T-cell (primary cell): ENCODE measurements at regions of chr11 and their contacts with region 1.

Region 1: DNA sequence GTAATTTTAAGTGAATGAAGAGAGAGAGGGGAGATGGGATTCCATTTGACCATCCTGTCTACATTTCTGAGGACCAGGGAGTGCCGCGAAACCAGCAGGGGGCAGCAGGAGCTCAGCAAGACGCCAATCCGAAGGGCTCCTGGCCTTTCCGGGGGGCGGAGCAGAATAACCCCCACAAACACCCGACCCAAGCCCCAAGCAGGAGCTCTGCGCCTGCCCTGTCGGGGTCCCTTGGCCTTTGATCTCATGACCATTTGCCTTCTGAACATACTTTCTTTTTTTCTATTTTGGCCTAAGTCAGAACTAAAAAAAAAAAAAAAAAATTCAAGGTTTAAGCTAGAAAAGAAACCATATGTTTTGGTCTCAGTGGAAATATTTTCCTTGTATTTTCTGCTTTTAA is 21.9 kb upstream of the SCN2B start:
- DNase-seq: peak; percentile 57 to 89 (median 76)
- ATAC-seq: peak; percentile 39 to 67 (median 64)
- H3K4me3 ChIP-seq: no peak overlapping the region
- H3K4me3 Mint-ChIP-seq: no peak overlapping the region
- H3K27ac ChIP-seq: peak overlapping the region; percentile 37
- H3K27ac Mint-ChIP-seq: peak overlapping the region; percentile 74 to 78
- H3K4me1 ChIP-seq: peaks cover 26 to 38% of the 10 kb centered on the region in 2 experiments
- H3K4me1 Mint-ChIP-seq: peaks cover 8 to 16% (median 14%) of the 10 kb centered on the region in 3 donors
- H3K27me3 ChIP-seq: no peaks in the 10 kb centered on the region
- H3K27me3 Mint-ChIP-seq: no peaks in the 10 kb centered on the region

Region 2: GRCh38 chr11:117796872-117797529 is 401.4 kb before region 1 on chr11 and contains the start of gene DSCAML1:
- CTCF ChIA-PET with region 1: no interaction called
- POLR2A ChIA-PET with region 1: no interaction called
- DNase-seq: peak in 21 of 35 experiments; percentile 12 to 58 (median 33)
- ATAC-seq: peak; percentile 80 to 93 (median 86)
- H3K4me3 ChIP-seq: peak within 1 kb of the TSS; percentile 30 to 49
- H3K4me3 Mint-ChIP-seq: peak within 1 kb of the TSS; percentile 58 to 71 (median 65)
- H3K27ac ChIP-seq: no peak within 1 kb of the TSS
- H3K27ac Mint-ChIP-seq: no peak within 1 kb of the TSS
- H3K4me1 ChIP-seq: peaks cover 0 to 23% of the 10 kb centered on the region in 2 experiments
- H3K4me1 Mint-ChIP-seq: peaks cover 11 to 21% (median 20%) of the 10 kb centered on the region in 3 donors
- H3K27me3 ChIP-seq: peaks cover 9 to 66% of the 10 kb centered on the region in 2 experiments
- H3K27me3 Mint-ChIP-seq: peaks cover 53 to 62% of the 10 kb centered on the region in 2 donors
- total RNA-seq, gene DSCAML1: 0.15 to 2.4 (median 0.96) TPM

Region 3: GRCh38 chr11:118209033-118209432 is 10.7 kb after region 1 on chr11:
- CTCF ChIA-PET with region 1: interaction called, 6 to 10 read pairs
- POLR2A ChIA-PET with region 1: interaction called in 1 of 2 experiments, 3 read pairs
- DNase-seq: no peak
- ATAC-seq: no peak
- H3K4me3 ChIP-seq: no peak overlapping the region
- H3K4me3 Mint-ChIP-seq: no peak overlapping the region
- H3K27ac ChIP-seq: no peak overlapping the region
- H3K27ac Mint-ChIP-seq: peak overlapping the region; percentile 28 to 71
- H3K4me1 ChIP-seq: peaks cover 37% of the 10 kb centered on the region in 2 experiments
- H3K4me1 Mint-ChIP-seq: peaks cover 46 to 66% (median 63%) of the 10 kb centered on the region in 3 donors
- H3K27me3 ChIP-seq: no peaks in the 10 kb centered on the region
- H3K27me3 Mint-ChIP-seq: no peaks in the 10 kb centered on the region

Region 4: GRCh38 chr11:118224511-118225188 is 26.3 kb after region 1 on chr11 and contains the start of gene JAML:
- CTCF ChIA-PET with region 1: interaction called, 4 to 20 read pairs
- POLR2A ChIA-PET with region 1: interaction called in 1 of 2 experiments, 4 read pairs
- DNase-seq: peak; percentile 39 to 86 (median 67)
- ATAC-seq: peak; percentile 84 to 90 (median 90)
- H3K4me3 ChIP-seq: peak within 1 kb of the TSS; percentile 63 to 87
- H3K4me3 Mint-ChIP-seq: peak within 1 kb of the TSS; percentile 83 to 91 (median 90)
- H3K27ac ChIP-seq: peak within 1 kb of the TSS; percentile 84
- H3K27ac Mint-ChIP-seq: peak within 1 kb of the TSS in 1 of 2 donors; percentile 94
- H3K4me1 ChIP-seq: peaks cover 73 to 75% of the 10 kb centered on the region in 2 experiments
- H3K4me1 Mint-ChIP-seq: peaks cover 40 to 61% (median 55%) of the 10 kb centered on the region in 3 donors
- H3K27me3 ChIP-seq: no peaks in the 10 kb centered on the region
- H3K27me3 Mint-ChIP-seq: no peaks in the 10 kb centered on the region
- total RNA-seq, gene JAML: 60.8 to 165 (median 95.8) TPM

Region 5: GRCh38 chr11:118251858-118252652 is 53.7 kb after region 1 on chr11 and contains the start of gene MPZL3:
- CTCF ChIA-PET with region 1: interaction called in 1 of 2 experiments, 18 read pairs
- POLR2A ChIA-PET with region 1: interaction called in 1 of 2 experiments, 6 read pairs
- DNase-seq: peak; percentile 70 to 96 (median 83)
- ATAC-seq: peak; percentile 72 to 89 (median 78)
- H3K4me3 ChIP-seq: peak within 1 kb of the TSS; percentile 81 to 93
- H3K4me3 Mint-ChIP-seq: peak within 1 kb of the TSS; percentile 98 to 99 (median 99)
- H3K27ac ChIP-seq: peak within 1 kb of the TSS; percentile 98
- H3K27ac Mint-ChIP-seq: peak within 1 kb of the TSS; percentile 99 to 100
- H3K4me1 ChIP-seq: peaks cover 6 to 14% of the 10 kb centered on the region in 2 experiments
- H3K4me1 Mint-ChIP-seq: peaks cover 32 to 47% (median 44%) of the 10 kb centered on the region in 3 donors
- H3K27me3 ChIP-seq: no peaks in the 10 kb centered on the region
- H3K27me3 Mint-ChIP-seq: peaks cover 0 to 2% of the 10 kb centered on the region in 2 donors
- total RNA-seq, gene MPZL3: 9.8 to 25.2 (median 16.5) TPM

Region 6: DNA sequence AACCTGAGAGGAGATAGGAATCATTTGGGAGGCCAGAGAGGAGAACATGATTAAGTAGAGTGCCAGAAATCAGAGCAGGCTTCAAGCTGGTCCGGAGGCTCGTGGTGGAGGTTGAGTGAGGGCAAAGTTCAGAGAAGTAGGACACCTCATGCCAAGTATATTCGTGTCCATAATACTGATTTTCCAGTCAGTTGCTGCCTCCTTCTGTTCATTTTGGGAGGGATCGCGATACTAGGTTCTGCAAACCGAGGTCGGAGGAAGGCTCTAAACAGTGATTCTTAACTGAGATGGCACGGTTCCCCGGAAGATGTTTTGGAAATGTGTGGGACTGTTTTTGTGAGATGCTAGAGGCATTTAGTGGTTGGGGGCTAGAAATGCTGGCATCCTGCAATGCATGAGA is 92.6 kb after region 1 on chr11:
- CTCF ChIA-PET with region 1: interaction called, 26 to 27 read pairs
- POLR2A ChIA-PET with region 1: interaction called in 1 of 2 experiments, 3 read pairs
- DNase-seq: peak in 18 of 35 experiments; percentile 8 to 74 (median 26)
- ATAC-seq: peak; percentile 60 to 83 (median 70)
- H3K4me3 ChIP-seq: no peak overlapping the region
- H3K4me3 Mint-ChIP-seq: no peak overlapping the region
- H3K27ac ChIP-seq: no peak overlapping the region
- H3K27ac Mint-ChIP-seq: no peak overlapping the region
- H3K4me1 ChIP-seq: peaks cover 0 to 5% of the 10 kb centered on the region in 2 experiments
- H3K4me1 Mint-ChIP-seq: peaks cover 12 to 22% (median 14%) of the 10 kb centered on the region in 3 donors
- H3K27me3 ChIP-seq: no peaks in the 10 kb centered on the region
- H3K27me3 Mint-ChIP-seq: no peaks in the 10 kb centered on the region

Region 7: GRCh38 chr11:118304568-118305248 is 106.3 kb after region 1 on chr11 and contains the start of gene CD3E:
- CTCF ChIA-PET with region 1: interaction called, 15 to 27 read pairs
- POLR2A ChIA-PET with region 1: interaction called in 1 of 2 experiments, 8 read pairs
- DNase-seq: peak; percentile 46 to 80 (median 61)
- ATAC-seq: peak; percentile 77 to 85 (median 80)
- H3K4me3 ChIP-seq: peak within 1 kb of the TSS; percentile 87 to 91
- H3K4me3 Mint-ChIP-seq: peak within 1 kb of the TSS; percentile 95 to 99 (median 99)
- H3K27ac ChIP-seq: peak within 1 kb of the TSS; percentile 91
- H3K27ac Mint-ChIP-seq: peak within 1 kb of the TSS; percentile 100
- H3K4me1 ChIP-seq: peaks cover 39 to 59% of the 10 kb centered on the region in 2 experiments
- H3K4me1 Mint-ChIP-seq: peaks cover 75 to 91% (median 84%) of the 10 kb centered on the region in 3 donors
- H3K27me3 ChIP-seq: no peaks in the 10 kb centered on the region
- H3K27me3 Mint-ChIP-seq: no peaks in the 10 kb centered on the region
- total RNA-seq, gene CD3E: 555 to 659 (median 596) TPM

Region 8: DNA sequence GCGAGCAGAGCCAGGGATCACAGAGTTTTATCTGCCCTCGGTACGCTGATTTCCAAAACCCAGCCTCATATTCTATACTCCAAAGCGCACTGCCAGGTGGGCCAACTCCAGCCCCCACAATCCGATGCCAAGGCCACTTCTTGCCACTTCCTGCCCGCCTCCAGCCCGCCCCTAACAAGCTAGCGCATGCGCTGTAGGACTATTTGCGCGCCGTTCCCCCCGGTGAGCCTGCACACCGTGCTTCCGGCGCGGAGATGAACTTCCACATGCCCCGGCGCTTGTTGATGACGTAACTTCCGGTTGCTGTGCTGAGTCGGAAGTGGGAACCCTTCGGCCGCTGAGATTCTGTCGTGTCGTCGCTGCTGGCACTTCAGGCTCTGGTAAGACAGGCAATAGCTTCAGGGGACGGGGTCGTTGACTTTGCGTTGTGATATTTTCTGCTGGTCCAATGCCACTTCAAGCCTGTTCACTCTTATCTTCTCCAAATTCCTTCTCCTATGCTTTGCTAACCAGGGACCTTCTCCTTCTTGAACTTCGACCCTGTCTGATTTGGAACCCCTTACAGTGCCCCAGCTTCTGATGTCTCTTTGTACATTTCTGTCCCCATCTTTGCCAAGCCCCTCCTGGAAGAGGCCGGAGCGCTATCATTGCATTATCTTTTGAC is 161.1 kb after region 1 on chr11 and contains the start of gene UBE4A:
- CTCF ChIA-PET with region 1: interaction called, 5 to 24 read pairs
- POLR2A ChIA-PET with region 1: interaction called in 1 of 2 experiments, 8 read pairs
- DNase-seq: peak; percentile 89 to 99 (median 96)
- ATAC-seq: peak; percentile 91 to 96 (median 94)
- H3K4me3 ChIP-seq: peak within 1 kb of the TSS; percentile 71 to 88
- H3K4me3 Mint-ChIP-seq: peak within 1 kb of the TSS; percentile 98 to 99 (median 99)
- H3K27ac ChIP-seq: peak within 1 kb of the TSS; percentile 82
- H3K27ac Mint-ChIP-seq: peak within 1 kb of the TSS; percentile 97 to 99
- H3K4me1 ChIP-seq: peaks cover 14 to 30% of the 10 kb centered on the region in 2 experiments
- H3K4me1 Mint-ChIP-seq: peaks cover 49 to 52% (median 50%) of the 10 kb centered on the region in 3 donors
- H3K27me3 ChIP-seq: no peaks in the 10 kb centered on the region
- H3K27me3 Mint-ChIP-seq: no peaks in the 10 kb centered on the region
- total RNA-seq, gene UBE4A: 40.7 to 44.9 (median 41.8) TPM